ENCODE measurements at regions of chr14 and their contacts with region 1.

Region 1: DNA sequence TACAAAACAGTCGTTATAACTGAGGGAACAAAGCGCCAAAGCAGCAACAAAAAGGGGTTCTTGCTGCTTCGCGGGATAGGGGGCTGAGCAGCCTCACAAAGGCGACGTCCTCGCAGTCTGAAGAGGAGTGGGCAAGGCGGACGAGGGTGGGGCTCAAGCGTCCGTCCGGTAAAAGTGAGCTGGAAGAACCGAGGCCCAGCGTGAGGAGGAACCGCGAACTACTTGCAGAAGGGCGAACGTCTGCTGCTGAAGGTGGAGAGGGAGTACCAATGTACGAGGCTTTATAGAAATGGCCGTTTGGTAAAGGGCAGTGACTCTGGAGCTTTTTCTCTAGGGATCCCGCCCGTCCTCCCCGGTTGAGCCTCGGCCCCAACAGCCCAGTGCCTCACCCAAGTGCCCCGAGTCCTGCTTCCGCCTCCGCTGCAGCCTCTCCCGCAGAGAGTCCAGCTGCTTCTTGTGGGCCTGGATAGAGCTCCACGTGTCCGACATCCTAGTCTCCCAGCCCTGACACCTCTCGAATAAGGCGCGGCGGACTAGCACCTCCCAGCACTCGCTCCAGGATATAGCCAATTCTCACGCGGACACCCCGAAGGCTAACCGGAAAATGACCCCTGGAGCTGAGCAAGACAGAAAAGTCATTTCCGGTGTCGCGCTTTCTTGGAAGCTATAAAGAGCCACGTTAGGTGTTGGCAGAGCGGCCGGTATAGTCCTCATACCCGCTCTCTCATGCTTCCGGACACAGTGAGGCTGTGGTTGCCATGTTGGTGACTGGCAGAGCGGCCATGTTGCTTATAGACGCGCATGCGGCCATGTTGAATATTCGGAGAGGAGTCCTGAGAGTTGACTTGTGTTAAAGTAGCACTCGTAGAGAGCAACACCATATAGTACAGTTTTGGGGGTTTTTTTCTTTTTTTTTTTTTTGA is at the start of gene METTL3:
- DNase-seq: peak; percentile 97
- ATAC-seq: peak; percentile 99
- H3K4me3 Mint-ChIP-seq: peak within 1 kb of the TSS; percentile 96
- H3K27ac Mint-ChIP-seq: peak within 1 kb of the TSS; percentile 99
- H3K4me1 Mint-ChIP-seq: peaks cover 32% of the 10 kb centered on the region
- H3K27me3 Mint-ChIP-seq: peaks cover 6% of the 10 kb centered on the region
- total RNA-seq, gene METTL3: 68.3 to 70.8 TPM

Region 2: DNA sequence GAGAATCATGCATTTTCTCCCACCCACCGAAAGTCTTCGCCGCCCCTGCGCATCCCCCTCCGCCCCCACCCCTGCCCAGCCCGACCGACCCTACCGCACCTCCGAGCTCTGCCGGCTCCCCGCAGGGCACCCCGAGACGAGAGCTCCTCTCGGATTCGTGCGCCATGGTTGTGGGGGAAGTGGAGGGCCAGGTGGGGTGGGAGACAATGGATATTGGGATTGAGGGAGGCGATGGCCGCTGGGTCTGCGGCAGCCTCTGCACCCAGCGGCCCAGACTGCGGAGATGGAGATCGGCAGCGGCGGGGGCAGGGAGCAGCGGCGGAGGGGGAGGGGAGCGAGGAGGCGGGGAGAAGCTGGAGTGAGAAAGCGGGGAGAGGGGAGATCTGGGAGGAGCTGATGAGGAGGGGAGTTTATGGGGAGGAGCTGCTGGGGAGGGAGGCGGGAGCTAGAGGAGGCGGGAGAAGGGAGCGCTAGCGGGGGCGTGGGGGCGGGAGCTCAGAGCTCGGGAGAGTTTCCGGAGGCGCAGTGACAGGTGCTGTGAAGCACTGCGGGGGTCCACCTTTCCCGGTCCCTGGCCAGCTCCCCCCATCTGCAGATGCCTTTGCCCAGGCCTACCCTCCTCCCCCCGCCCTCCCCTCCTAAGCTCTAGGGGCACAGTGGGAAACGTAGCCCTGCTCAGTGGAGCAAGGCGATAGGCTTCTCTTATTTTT is 15.1 kb after region 1 on chr14 and contains the start of gene SALL2:
- CTCF ChIA-PET with region 1: interaction called, 6 read pairs
- POLR2A ChIA-PET with region 1: interaction called, 21 read pairs
- DNase-seq: peak; percentile 70
- ATAC-seq: peak; percentile 86
- H3K4me3 Mint-ChIP-seq: peak within 1 kb of the TSS; percentile 72
- H3K27ac Mint-ChIP-seq: peak within 1 kb of the TSS; percentile 13
- H3K4me1 Mint-ChIP-seq: peaks cover 17% of the 10 kb centered on the region
- H3K27me3 Mint-ChIP-seq: peaks cover 7% of the 10 kb centered on the region
- total RNA-seq, gene SALL2: 1.9 to 2.0 TPM

Measured in activated CD8-positive, alpha-beta T cell treated with anti-CD3 and anti-CD28 coated beads, Interleukin-2, amount 10 ng/mL, durations not matched to agents 7 days and 5 days (primary cell).